OCI-LY7 (cell line): ENCODE measurements at regions of chr7 and their contacts with region 1.

Region 1: GRCh38 chr7:111486472-111487142 is 75.7 kb downstream of the IMMP2L start:
- DNase-seq: peak; percentile 49
- H3K4me3 ChIP-seq: no peak overlapping the region
- H3K27ac ChIP-seq: no peak overlapping the region
- H3K4me1 ChIP-seq: no peaks in the 10 kb centered on the region
- CTCF ChIP-seq: peak; percentile 91

Region 2: DNA sequence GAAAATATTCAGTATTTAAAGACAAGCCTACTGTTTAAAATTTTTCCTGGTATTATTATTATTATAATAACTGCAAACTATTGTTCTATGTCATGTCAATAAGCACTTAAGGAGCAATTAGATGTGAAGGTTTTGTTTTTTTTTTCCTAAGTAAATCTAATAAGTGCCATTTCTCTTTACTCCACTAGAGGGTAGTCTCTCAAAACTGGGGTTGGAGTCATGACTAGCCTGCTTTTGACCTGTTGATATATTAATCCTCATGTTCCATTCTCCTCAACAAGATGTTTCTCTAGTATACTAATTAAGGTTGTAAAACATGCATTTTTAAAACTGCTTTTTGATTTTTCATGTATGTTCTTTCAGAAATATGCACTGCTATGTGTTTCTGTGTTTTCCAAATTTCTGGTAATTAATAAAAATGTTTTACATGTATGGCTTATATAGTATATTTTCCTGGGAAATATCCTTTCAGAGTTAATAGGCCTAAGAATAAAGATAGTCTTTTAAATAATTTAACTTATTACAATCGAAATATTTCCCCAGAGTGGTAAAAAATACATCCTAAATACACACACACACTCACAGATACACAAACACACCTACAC is 396.7 kb before region 1 on chr7:
- CTCF ChIA-PET with region 1: no interaction called
- POLR2A ChIA-PET with region 1: no interaction called
- intact Hi-C with region 1: loop called (anchors 5 kb)
- DNase-seq: peak; percentile 44
- H3K4me3 ChIP-seq: no peak overlapping the region
- H3K27ac ChIP-seq: no peak overlapping the region
- H3K4me1 ChIP-seq: no peaks in the 10 kb centered on the region
- CTCF ChIP-seq: peak; percentile 87

Region 3: GRCh38 chr7:112150823-112151641 is 664.4 kb after region 1 on chr7:
- CTCF ChIA-PET with region 1: no interaction called
- POLR2A ChIA-PET with region 1: no interaction called
- intact Hi-C with region 1: no loop called
- DNase-seq: no peak
- H3K4me3 ChIP-seq: no peak overlapping the region
- H3K27ac ChIP-seq: no peak overlapping the region
- H3K4me1 ChIP-seq: no peaks in the 10 kb centered on the region
- CTCF ChIP-seq: no peak